ENCODE measurements at regions of chr4 and their contacts with region 1.

Region 1: GRCh38 chr4:6327041-6327917 is 57.6 kb downstream of the WFS1 start:
- DNase-seq: peak; percentile 90

Region 2: DNA sequence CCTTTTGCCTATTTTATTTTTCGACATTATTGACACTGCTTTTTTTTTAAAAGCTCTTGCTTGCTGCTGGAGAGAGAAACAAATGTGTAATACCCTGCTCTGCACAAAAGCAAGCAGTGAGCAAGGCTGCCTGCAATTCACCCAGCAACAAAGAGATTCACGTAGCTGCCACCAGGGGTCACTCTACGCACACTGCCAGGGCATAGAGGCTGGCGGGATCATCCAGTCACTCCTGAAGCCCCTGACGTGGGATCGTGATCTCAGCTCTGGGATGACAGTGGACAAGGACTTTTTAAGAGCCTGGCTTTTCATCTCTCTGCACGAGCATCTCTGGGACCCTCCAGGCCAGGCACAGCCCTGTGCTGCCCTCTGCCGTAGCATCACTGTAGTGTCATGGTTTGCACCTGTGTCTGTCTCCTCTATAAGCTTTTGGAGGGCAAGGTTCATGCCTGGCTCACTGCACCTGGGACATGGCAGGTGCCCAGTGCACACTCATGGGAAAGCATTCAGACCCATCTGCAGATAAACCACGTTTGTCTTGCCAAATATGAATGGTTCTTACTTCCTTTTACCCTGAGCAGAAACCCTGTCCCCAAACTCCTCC is 328.8 kb before region 1 on chr4:
- intact Hi-C with region 1: loop called (anchors 5 kb)
- DNase-seq: peak; percentile 77

Region 3: GRCh38 chr4:6250235-6250983 is 76.9 kb before region 1 on chr4:
- intact Hi-C with region 1: loop called (anchors 1 kb)
- DNase-seq: no peak

Region 4: GRCh38 chr4:6264225-6264540 is 63.1 kb before region 1 on chr4:
- intact Hi-C with region 1: loop called (anchors 2 kb)
- DNase-seq: no peak

Region 5: DNA sequence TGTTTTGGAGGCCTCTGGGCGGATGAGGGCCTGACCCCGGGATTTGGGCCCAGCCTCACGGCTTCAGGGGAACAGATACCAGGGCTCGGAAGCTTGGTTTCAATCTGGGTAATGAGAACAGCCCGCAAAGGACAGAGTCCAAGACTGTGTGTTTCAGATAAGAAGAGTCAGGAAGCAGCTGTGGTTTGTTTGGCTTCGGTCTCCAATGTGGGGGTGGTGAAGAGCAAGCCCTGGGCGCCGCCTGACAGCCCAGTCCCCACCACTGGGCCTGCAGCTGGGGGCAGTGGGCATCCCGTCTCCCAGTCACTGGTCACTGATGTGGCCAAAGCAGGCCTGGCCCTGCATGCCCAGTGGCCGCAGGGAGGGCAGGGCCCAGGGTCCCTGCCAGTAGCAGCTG is 48.5 kb before region 1 on chr4:
- intact Hi-C with region 1: no loop called
- DNase-seq: no peak

Region 6: GRCh38 chr4:6546681-6547447 is 219.6 kb after region 1 on chr4:
- intact Hi-C with region 1: loop called (anchors 5 kb)
- DNase-seq: no peak

Measured in cardiac septum (tissue), 1 donor.